ENCODE measurements at regions of chr12 and their contacts with region 1.

Region 1: GRCh38 chr12:9741726-9742125 is 8.8 kb upstream of the CLECL1 start:
- DNase-seq: no peak
- ATAC-seq: no peak
- H3K4me3 ChIP-seq: no peak overlapping the region
- H3K27ac ChIP-seq: no peak overlapping the region
- H3K4me1 ChIP-seq: peaks cover 9 to 12% of the 10 kb centered on the region in 2 experiments
- H3K27me3 ChIP-seq: no peaks in the 10 kb centered on the region
- CTCF ChIP-seq: no peak
- EP300 ChIP-seq: no peak
- POLR2A ChIP-seq: no peak
- RAD21 ChIP-seq: no peak

Region 2: DNA sequence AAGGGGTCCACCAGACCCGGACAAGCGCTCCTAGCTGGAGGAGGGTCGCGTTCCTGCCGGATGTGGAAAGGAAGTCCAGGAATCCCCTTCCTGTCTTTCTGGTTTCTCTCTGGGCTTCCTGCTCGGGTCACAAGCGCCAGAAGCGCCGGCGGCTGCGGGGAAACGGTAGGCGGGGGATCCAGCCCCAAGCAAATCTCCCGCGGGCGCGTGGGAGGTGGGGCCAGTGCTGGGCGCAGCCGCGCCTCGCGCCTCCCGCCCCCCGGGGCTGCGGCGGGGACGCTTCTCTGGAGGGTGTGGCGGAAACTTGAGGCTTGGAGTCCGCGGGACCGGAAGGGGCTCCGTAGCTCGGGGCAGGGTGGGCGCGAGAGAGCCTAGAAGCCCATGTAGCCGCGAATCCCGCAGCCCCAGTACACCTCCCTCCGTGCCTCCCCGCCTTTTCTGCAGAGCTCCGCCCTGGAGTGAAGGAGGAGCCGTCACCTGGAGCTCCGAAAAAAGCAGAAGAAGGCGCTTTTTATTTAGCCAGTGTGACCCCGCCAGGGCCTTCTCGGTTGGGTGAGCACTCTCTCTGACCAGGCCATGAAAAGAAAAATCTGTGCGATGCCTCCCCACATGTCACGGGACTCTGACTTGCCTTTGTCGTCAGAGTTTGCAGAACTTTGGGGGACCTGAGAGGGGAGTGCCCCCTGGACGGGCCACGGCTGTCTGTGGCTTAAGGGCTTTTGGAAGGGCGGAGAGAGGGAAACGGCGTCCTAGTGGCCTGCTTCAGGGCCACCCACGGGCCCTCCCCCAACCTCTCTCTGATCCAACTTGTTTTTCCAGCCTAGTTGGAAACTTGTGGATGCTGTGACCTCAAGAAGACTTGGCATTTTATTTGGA is 93.7 kb before region 1 on chr12:
- CTCF ChIA-PET with region 1: no interaction called
- POLR2A ChIA-PET with region 1: no interaction called
- in situ Hi-C with region 1: no loop called
- intact Hi-C with region 1: loop called (anchors 5 kb)
- DNase-seq: peak; percentile 86 to 91 (median 88)
- ATAC-seq: peak; percentile 90
- H3K4me3 ChIP-seq: peak overlapping the region; percentile 57
- H3K27ac ChIP-seq: peak overlapping the region; percentile 92
- H3K4me1 ChIP-seq: peaks cover 0 to 5% of the 10 kb centered on the region in 2 experiments; a peak in 3 of 5 replicates
- H3K27me3 ChIP-seq: no peaks in the 10 kb centered on the region
- CTCF ChIP-seq: no peak
- EP300 ChIP-seq: peak; percentile 12
- POLR2A ChIP-seq: peak; percentile 72
- RAD21 ChIP-seq: no peak

Region 3: DNA sequence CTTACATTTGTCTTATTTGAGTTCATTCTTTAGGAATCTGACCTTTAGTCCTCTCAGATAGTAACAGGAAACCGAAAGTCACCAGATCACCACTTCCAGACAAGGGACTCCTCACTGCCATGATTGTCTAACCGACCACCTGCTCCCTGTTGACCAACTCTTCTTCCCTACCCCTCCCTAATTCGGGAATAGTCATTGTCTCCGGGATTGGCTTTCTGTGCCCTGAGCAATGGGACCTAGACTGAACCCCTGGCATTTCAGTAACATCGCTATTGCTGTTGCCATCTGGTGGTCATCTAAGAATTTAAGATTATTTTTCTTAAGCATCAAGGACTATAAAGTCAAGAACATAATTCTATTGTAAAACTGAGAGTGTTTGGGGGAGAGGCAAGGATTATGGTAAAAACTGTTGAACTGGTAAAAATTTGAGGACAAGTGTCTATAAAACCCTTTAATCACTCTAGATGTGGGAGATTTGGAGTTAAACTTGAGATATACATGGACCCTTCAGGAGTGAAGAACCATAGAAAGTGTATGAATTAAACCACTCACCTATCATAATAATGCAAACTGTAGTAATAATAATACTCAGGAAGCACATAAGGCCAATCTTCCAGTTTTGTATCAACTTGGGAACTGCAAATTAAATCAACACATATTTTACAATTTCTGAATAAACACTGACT is 184.1 kb after region 1 on chr12:
- CTCF ChIA-PET with region 1: no interaction called
- POLR2A ChIA-PET with region 1: no interaction called
- in situ Hi-C with region 1: loop called (anchors 10 kb)
- intact Hi-C with region 1: no loop called
- DNase-seq: peak in 2 of 4 experiments; percentile 7 to 23
- ATAC-seq: 0 out of 3 replicates have a peak, but pooled peaks have one; percentile 45
- H3K4me3 ChIP-seq: no peak overlapping the region
- H3K27ac ChIP-seq: no peak overlapping the region
- H3K4me1 ChIP-seq: no peaks in the 10 kb centered on the region
- H3K27me3 ChIP-seq: no peaks in the 10 kb centered on the region
- CTCF ChIP-seq: peak; percentile 33 to 42 (median 33); a peak in 4 of 6 replicates
- EP300 ChIP-seq: no peak
- POLR2A ChIP-seq: no peak
- RAD21 ChIP-seq: peak; percentile 33 to 52

Region 4: DNA sequence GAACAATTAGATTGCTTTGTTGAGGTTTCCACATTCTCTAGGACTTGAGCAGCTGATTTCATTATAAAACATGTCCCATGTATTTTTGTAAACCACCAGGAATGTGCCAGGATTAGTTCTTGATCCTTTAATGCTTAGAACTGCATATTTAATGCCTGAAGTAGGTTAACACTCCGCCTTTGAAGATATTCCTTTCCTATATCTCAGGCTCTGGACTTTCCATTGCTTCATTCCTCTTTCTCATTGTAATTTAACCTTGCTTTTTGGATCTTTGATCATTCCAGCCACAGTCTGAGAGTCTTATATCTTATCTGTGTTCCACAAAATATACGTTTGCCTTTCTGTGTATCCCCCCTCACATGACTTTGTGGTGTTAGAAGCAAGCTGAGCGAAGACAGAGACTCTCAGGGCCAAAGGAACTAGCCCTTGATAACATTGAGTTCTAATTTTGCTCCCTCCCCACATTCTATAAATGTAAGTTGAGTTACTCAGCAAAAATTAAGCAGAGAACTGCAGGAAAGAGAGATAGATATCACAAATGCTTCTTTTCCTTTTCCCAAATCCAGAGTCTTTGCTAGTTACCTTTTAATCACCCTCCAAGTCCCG is 259.5 kb after region 1 on chr12:
- CTCF ChIA-PET with region 1: no interaction called
- POLR2A ChIA-PET with region 1: no interaction called
- in situ Hi-C with region 1: loop called (anchors 5 kb)
- intact Hi-C with region 1: loop called (anchors 10 kb)
- DNase-seq: no peak
- ATAC-seq: no peak
- H3K4me3 ChIP-seq: no peak overlapping the region
- H3K27ac ChIP-seq: no peak overlapping the region
- H3K4me1 ChIP-seq: no peaks in the 10 kb centered on the region
- H3K27me3 ChIP-seq: no peaks in the 10 kb centered on the region
- CTCF ChIP-seq: no peak
- EP300 ChIP-seq: no peak
- POLR2A ChIP-seq: no peak
- RAD21 ChIP-seq: no peak

Region 5: DNA sequence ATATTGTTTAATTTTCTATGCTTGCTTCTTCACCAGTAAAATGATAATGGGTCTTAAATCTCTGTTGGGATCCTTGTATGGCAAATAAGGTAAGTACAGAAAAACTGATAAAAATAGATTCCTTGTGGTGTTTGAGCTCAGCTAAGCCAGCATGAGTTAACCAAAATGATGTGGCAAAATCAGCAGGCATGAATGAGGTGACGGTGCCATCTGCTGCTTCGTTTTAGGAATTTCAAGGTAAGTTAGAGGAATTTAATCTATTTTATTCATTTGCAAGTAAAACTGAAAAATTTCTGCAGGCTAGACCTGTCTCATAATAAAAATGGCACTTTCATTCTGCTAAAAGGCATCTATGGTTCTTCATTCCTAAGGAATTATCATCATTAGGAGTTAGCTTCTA is 398.3 kb after region 1 on chr12:
- CTCF ChIA-PET with region 1: no interaction called
- POLR2A ChIA-PET with region 1: no interaction called
- in situ Hi-C with region 1: loop called (anchors 5 kb)
- intact Hi-C with region 1: no loop called
- DNase-seq: peak in 2 of 4 experiments; percentile 7 to 44
- ATAC-seq: no peak
- H3K4me3 ChIP-seq: no peak overlapping the region
- H3K27ac ChIP-seq: no peak overlapping the region
- H3K4me1 ChIP-seq: no peaks in the 10 kb centered on the region
- H3K27me3 ChIP-seq: no peaks in the 10 kb centered on the region; a peak in 1 of 5 replicates
- CTCF ChIP-seq: peak; percentile 31 to 55 (median 43); a peak in 3 of 6 replicates
- EP300 ChIP-seq: no peak
- POLR2A ChIP-seq: no peak
- RAD21 ChIP-seq: peak; percentile 61 to 67

Measured in K562 (cell line).